Mammary epithelial cell (primary cell): ENCODE measurements at regions of chr7 and their contacts with region 1.

Region 1: GRCh38 chr7:131107337-131108211 is 220.1 kb upstream of the MKLN1 start:
- DNase-seq: peak; percentile 63
- H3K4me3 ChIP-seq: peak overlapping the region; percentile 75 to 86 (median 75)
- H3K27ac ChIP-seq: peak overlapping the region; percentile 76
- H3K4me1 ChIP-seq: peaks cover 53% of the 10 kb centered on the region
- H3K27me3 ChIP-seq: no peaks in the 10 kb centered on the region
- CTCF ChIP-seq: no peak

Region 2: DNA sequence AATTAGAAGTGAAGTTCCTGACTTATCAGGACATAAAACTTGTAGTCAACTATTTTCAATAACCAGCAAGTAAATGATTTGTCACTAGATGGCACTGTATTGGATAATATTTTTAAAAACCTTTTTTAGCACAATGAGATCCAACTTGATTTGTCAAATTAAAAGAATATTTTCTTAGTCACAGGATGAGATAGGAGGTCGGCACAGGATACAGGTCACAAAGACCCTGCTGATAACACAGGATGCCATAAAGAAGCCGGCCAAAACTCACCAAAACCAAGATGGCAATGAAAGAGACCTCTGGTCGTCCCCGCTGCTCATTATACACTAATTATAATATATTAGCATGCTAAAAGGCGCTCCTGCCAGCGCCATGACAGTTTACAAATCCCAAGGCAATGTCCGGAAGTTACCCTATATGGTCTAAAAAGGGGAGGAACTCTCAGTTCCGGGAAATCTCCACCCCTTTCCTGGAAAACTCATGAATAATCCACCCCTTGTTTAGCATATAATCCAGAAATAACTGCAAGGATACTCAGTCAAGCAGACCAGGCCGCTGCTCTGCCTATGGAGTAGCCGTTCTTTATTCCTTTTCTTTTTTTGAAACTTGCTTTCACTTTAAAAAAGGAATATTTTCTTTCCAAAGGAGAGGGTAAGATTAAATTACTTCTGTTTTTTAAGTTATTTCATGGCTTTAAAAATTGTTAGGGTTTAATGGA is 35.6 kb before region 1 on chr7:
- CTCF ChIA-PET with region 1: interaction called, 5 read pairs
- dilution Hi-C with region 1: no loop called
- in situ Hi-C with region 1: no loop called
- intact Hi-C with region 1: loop called (anchors 2 kb)
- DNase-seq: peak; percentile 72
- H3K4me3 ChIP-seq: no peak overlapping the region
- H3K27ac ChIP-seq: no peak overlapping the region
- H3K4me1 ChIP-seq: peaks cover 23% of the 10 kb centered on the region
- H3K27me3 ChIP-seq: no peaks in the 10 kb centered on the region
- CTCF ChIP-seq: peak; percentile 42 to 49

Region 3: DNA sequence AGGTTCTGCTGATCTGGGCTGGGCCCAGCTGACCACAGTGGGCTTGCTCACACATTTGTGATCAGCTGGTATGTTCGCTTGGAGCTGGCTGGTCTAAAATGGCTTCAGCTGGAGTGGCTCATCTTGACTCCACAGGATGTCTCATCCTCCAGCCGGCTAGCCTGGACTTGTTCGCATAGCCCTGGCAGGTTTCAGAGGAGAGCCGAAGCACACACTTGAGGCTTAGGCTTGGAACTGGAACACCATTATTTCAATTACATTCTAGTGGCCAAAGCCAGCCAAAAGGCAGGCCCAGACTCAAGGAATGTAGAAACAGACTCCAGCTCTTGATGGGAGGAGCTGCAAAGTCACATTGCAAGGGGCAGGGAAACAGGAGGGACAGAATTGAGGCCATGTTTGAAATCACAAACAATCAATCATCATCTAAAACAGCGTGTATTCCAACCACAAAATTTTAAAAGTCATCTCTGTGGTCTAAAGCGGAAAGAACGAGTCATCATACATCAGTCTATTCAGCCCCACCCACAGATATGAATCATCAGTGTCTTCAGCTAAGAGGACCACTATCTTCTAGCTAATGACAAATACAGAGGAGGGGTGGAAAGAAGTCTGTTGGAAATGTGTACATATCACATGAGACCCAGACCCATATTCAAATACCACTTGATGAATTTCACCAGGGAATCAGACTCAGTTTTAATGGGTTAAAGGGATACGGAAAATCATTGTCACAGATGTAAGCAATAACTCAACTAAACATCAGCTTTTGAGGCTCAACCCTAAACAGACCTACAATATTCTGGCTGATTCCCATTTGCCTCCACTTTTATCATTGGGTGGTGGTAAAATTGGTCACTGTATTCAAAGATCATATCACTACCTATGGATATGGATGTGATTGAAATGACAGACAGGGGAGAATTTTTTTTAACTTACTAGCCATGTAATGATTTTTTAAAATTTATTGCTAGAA is 81.1 kb after region 1 on chr7:
- CTCF ChIA-PET with region 1: no interaction called
- dilution Hi-C with region 1: no loop called
- in situ Hi-C with region 1: no loop called
- intact Hi-C with region 1: loop called (anchors 1 kb)
- DNase-seq: peak; percentile 99
- H3K4me3 ChIP-seq: no peak overlapping the region
- H3K27ac ChIP-seq: peak overlapping the region; percentile 84
- H3K4me1 ChIP-seq: peaks cover 30% of the 10 kb centered on the region
- H3K27me3 ChIP-seq: no peaks in the 10 kb centered on the region
- CTCF ChIP-seq: no peak

Region 4: GRCh38 chr7:131249003-131249402 is 141.4 kb after region 1 on chr7:
- CTCF ChIA-PET with region 1: no interaction called
- dilution Hi-C with region 1: no loop called
- in situ Hi-C with region 1: no loop called
- intact Hi-C with region 1: no loop called
- DNase-seq: peak; percentile 89
- H3K4me3 ChIP-seq: no peak overlapping the region
- H3K27ac ChIP-seq: no peak overlapping the region
- H3K4me1 ChIP-seq: peaks cover 21% of the 10 kb centered on the region
- H3K27me3 ChIP-seq: no peaks in the 10 kb centered on the region
- CTCF ChIP-seq: no peak

Region 5: GRCh38 chr7:131284702-131285419 is 177.3 kb after region 1 on chr7:
- CTCF ChIA-PET with region 1: no interaction called
- dilution Hi-C with region 1: no loop called
- in situ Hi-C with region 1: loop called in 1 of 2 experiments (anchors 25 kb)
- intact Hi-C with region 1: no loop called
- DNase-seq: peak; percentile 66
- H3K4me3 ChIP-seq: no peak overlapping the region
- H3K27ac ChIP-seq: no peak overlapping the region
- H3K4me1 ChIP-seq: peaks cover 5% of the 10 kb centered on the region
- H3K27me3 ChIP-seq: no peaks in the 10 kb centered on the region
- CTCF ChIP-seq: no peak

Region 6: GRCh38 chr7:131327626-131328376 is 220.2 kb after region 1 on chr7 and contains the start of gene MKLN1:
- CTCF ChIA-PET with region 1: no interaction called
- dilution Hi-C with region 1: no loop called
- in situ Hi-C with region 1: no loop called
- intact Hi-C with region 1: loop called (anchors 2 kb)
- DNase-seq: peak; percentile 83
- H3K4me3 ChIP-seq: peak within 1 kb of the TSS; percentile 93 to 96 (median 95)
- H3K27ac ChIP-seq: peak within 1 kb of the TSS; percentile 88
- H3K4me1 ChIP-seq: peaks cover 22% of the 10 kb centered on the region
- H3K27me3 ChIP-seq: no peaks in the 10 kb centered on the region
- CTCF ChIP-seq: no peak
- total RNA-seq, gene MKLN1: 33.9 to 38.0 TPM